ENCODE measurements at regions of chr17 and their contacts with region 1.

Region 1: DNA sequence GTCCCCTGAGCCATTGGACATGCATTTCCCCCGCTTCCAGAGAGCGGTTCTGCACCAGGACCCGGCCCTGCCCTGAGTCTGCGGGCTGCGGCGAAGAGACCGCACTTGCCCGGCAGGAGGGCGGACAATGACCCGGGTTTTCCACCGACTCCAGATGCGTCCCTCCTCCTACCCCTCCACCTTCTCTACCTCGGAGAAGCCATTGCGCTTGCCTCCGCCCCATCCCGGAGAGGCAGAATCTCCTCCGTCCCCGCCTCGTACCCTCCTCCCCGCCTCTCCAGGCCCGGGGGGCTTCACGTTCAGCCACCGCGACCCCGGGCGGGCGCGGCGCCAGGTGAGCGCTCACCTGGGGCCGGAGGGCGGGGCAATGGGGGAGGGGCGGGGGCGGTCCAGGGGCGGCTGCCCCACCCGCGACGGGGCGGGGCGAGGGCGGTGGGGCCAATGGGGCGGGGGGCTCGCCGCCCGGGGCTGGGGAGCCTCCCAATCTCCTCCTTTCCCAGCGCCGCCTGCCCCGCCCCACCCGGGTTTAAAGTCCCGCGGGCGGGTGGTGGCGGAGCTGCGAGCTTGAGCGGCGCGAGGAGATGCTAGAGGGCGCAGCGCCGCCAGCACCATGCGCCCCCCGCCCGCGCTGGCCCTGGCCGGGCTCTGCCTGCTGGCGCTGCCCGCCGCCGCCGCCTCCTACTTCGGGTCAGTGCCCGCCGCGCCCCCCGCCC is at the start of gene WNT9B:
- DNase-seq: peak in 1 of 7 donors; percentile 20
- H3K4me3 ChIP-seq: peak within 1 kb of the TSS in 2 of 4 donors; percentile 11 to 53
- H3K27ac ChIP-seq: no peak within 1 kb of the TSS
- H3K4me1 ChIP-seq: peaks cover 10 to 11% of the 10 kb centered on the region in 2 donors
- H3K27me3 ChIP-seq: peaks cover 23% of the 10 kb centered on the region
- CTCF ChIP-seq: no peak
- POLR2A ChIP-seq: no peak
- total RNA-seq, gene WNT9B: 0.23 to 2.0 (median 1.1) TPM in 7 of 9 donors, not detected in the others

Region 2: GRCh38 chr17:46940621-46941404 is 89.6 kb after region 1 on chr17:
- intact Hi-C with region 1: loop called in 1 of 2 experiments (anchors 5 kb)
- DNase-seq: peak; percentile 78 to 92 (median 86)
- H3K4me3 ChIP-seq: no peak overlapping the region
- H3K27ac ChIP-seq: no peak overlapping the region
- H3K4me1 ChIP-seq: peaks cover 14 to 15% of the 10 kb centered on the region in 2 donors
- H3K27me3 ChIP-seq: no peaks in the 10 kb centered on the region
- CTCF ChIP-seq: peak; percentile 77 to 87 (median 80)
- POLR2A ChIP-seq: no peak

Region 3: GRCh38 chr17:46962374-46962790 is 111.2 kb after region 1 on chr17:
- intact Hi-C with region 1: no loop called
- DNase-seq: no peak
- H3K4me3 ChIP-seq: no peak overlapping the region
- H3K27ac ChIP-seq: no peak overlapping the region
- H3K4me1 ChIP-seq: no peaks in the 10 kb centered on the region
- H3K27me3 ChIP-seq: no peaks in the 10 kb centered on the region
- CTCF ChIP-seq: no peak
- POLR2A ChIP-seq: no peak

Measured in adrenal gland (tissue), 19 donors.